Mammary epithelial cell (primary cell): ENCODE measurements at regions of chr9 and their contacts with region 1.

Region 1: GRCh38 chr9:115944166-115944948 is 209.2 kb upstream of the PAPPA start:
- DNase-seq: peak; percentile 98
- H3K4me3 ChIP-seq: peak overlapping the region in 1 of 3 experiments; percentile 6
- H3K27ac ChIP-seq: peak overlapping the region; percentile 95
- H3K4me1 ChIP-seq: peaks cover 54% of the 10 kb centered on the region
- H3K27me3 ChIP-seq: no peaks in the 10 kb centered on the region
- CTCF ChIP-seq: no peak

Region 2: DNA sequence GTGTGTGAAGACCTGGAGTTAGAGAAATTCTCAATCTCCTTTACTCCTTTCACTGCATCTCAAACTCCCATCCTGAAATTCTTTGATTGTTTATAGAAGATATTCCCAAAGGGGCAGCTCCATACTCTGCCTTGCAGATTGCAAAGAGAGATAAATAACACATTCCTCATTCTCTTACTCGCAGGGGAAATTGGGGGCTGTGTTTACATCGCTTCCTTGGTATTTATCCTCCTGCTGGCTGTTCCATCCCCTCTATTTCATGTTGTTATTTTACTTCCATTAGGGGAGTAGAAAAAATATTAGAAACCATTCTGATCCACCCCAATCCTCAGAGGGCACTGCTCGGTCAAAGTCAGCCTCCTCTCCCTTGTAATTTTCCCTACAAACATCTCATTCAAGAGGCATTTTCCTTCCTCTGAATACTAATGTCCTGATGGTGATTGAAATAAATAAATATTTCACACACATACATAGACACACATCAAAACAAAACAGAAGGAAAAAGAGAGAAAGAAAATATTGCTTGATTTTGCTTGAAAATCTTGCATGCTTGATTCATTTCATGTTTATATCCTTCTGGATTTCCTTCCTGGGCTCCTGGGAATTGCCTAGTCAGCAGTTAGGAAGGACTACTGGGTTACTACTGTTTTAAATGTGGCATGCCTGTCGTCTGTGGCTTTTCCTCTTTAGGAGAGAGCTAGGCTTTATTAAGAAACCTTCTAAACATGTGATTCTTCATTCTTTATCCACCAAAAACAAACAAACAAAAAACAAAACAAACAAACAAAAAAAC is 210.8 kb before region 1 on chr9:
- CTCF ChIA-PET with region 1: no interaction called
- dilution Hi-C with region 1: no loop called
- in situ Hi-C with region 1: no loop called
- intact Hi-C with region 1: no loop called
- DNase-seq: no peak
- H3K4me3 ChIP-seq: no peak overlapping the region
- H3K27ac ChIP-seq: no peak overlapping the region
- H3K4me1 ChIP-seq: peaks cover 10% of the 10 kb centered on the region
- H3K27me3 ChIP-seq: no peaks in the 10 kb centered on the region
- CTCF ChIP-seq: no peak

Region 3: DNA sequence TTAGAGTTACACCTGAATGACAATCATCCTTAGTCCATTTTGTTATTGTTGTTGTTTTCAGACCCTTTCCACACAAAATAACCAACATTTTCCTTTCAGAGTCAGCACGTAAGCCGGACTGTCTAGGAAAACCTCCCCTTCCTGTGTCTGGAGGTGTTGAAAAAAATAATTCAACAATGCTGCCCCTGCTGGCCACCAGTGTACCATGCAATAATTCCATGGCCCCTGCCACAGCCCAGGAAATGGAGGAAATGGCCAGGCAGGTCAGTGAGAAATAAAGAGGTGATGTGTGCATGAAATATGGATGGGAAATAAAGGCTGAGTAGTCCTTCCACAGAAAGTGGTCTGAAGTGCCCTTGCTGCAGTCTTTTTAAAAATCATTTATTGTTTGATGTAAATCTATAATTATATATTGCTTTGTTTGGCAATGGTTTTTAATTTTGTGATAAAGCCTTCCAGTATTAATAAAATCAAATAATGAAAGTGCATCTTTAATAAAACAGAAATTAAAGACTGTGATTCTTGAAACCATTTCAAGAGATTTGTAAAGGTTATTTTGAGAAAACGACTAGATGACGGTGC is 56.5 kb after region 1 on chr9:
- CTCF ChIA-PET with region 1: no interaction called
- dilution Hi-C with region 1: no loop called
- in situ Hi-C with region 1: no loop called
- intact Hi-C with region 1: loop called (anchors 5 kb)
- DNase-seq: no peak
- H3K4me3 ChIP-seq: no peak overlapping the region
- H3K27ac ChIP-seq: no peak overlapping the region
- H3K4me1 ChIP-seq: peaks cover 34% of the 10 kb centered on the region
- H3K27me3 ChIP-seq: no peaks in the 10 kb centered on the region
- CTCF ChIP-seq: peak; percentile 48 to 61